Heart right ventricle (tissue), 16 donors: ENCODE measurements at regions of chr17 and their contacts with region 1.

Region 1: DNA sequence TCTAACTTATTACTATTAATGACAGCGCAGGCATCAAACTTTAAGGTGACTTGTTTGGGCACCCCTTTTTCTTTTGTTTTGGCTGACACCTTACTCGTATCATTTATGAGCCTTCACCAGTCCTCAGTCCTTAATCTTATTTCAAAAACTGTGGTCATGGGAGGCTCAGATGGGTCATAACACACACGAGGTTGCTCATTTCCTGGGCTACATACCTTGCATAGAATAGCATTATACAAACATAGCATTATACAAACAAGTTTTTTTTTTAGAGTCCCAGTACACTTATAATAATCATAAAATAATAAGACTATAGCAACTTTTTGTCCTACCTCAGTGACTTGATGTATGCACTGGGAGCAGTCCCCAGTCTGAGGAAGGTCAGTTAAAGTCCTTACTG is 11.2 kb upstream of the ACSF2 start:
- DNase-seq: no peak
- ATAC-seq: no peak
- H3K4me3 ChIP-seq: no peak overlapping the region
- H3K27ac ChIP-seq: no peak overlapping the region
- H3K4me1 ChIP-seq: no peaks in the 10 kb centered on the region
- H3K27me3 ChIP-seq: no peaks in the 10 kb centered on the region
- CTCF ChIP-seq: no peak

Region 2: DNA sequence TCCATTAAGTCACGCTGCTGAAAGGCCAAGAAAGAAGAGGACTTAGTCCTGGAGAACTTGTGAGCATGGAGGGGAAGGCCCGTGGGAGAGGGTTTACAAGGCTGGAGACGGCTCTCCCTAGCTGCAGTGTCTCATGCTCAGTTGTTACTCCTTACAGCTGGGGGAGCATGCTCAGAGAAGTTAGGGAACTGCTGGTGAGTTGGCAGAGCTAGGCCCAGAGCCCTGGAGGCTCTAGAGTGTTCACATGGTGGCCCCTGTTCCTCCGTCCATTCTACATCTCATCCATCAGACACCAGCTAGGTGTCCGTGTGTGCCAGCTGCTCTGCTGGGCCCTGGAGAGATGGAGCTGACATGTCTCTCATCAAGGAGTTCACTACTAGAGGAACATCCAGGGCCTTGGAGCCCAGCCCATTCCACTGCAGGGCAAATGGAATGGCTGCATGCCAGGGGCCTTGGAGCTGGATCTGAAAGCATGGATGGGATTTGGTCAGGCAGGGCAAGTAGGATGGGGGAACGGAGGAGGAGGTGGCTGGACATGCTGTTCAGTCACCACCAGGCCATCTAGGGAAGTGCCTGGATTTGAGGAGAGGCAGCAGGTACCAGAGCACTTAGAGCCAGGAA is 62.6 kb before region 1 on chr17:
- intact Hi-C with region 1: loop called in 1 of 10 experiments (anchors 10 kb)
- DNase-seq: peak in 1 of 2 donors; percentile 39
- ATAC-seq: peak in 5 of 8 donors; percentile 2 to 27 (median 10)
- H3K4me3 ChIP-seq: no peak overlapping the region
- H3K27ac ChIP-seq: no peak overlapping the region
- H3K4me1 ChIP-seq: peaks cover 4 to 33% (median 19%) of the 10 kb centered on the region in 9 donors
- H3K27me3 ChIP-seq: no peaks in the 10 kb centered on the region
- CTCF ChIP-seq: no peak